AG04449 (cell line): ENCODE measurements at regions of chr4 and their contacts with region 1.

Region 1: DNA sequence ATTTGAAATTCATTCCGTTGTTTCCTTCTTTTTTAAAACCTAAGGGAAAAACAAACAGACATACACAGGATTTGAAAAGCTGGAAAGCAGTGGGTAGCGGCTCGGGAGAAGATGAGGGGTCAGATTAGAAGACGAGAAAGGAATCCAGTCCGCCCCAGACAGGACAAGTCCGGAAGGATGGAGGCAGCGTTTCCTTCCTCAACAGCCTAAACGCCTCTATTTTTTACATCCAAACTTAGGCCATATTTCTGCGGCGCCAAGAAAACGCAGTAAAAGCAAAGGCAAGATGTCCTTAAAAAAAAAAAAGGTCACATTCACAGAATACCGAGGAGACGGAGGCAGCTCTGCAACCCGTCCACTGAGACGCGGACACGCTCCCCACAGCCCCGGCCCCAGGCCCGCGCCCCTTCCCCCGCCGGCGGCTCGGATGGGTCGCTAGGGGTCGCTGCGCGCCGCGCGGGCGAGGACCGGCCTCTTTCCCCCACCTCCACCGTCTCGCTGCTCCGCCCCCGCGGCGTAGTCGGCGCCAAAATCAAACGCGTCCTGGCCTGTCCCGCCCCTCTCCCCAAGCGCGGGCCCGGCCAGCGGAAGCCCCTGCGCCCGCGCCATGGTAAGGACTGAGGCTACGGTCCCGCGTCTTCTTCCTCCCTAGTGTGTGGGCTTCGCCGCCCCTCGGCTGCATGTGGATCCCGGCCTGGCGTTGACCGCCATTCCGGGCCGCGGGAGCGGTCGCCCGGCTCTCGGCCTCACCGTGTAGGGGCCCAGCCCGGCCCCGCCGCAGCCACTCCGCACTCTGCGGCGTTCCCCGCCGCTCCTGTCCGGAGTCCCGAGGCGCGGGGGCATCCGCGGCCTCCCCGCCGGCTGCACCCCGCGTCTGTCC is at the start of gene MND1:
- DNase-seq: no peak
- H3K4me3 ChIP-seq: peak within 1 kb of the TSS; percentile 83
- CTCF ChIP-seq: peak; percentile 81

Region 2: DNA sequence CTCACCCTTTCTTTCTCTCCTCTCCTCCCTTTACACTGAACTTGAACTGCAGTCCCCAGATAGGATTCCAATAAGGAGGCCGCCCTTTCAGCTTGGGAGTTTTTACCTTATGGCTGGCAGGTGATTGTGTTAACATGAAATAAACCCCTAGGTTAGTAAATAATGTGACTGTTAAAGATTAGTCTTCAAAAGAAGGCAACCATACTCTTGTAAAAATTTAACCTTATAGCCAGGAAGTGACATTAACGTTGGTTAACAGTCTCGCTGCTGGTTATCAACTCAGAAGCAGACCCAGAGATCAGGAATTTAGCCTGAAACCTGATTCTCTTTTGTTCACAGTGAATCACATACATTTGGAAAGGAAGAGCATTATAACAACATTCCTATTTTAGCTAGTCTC is 393.0 kb before region 1 on chr4:
- CTCF ChIA-PET with region 1: no interaction called
- POLR2A ChIA-PET with region 1: no interaction called
- DNase-seq: no peak
- H3K4me3 ChIP-seq: no peak overlapping the region
- CTCF ChIP-seq: no peak

Region 3: GRCh38 chr4:153023681-153024394 is 320.5 kb before region 1 on chr4:
- CTCF ChIA-PET with region 1: no interaction called
- POLR2A ChIA-PET with region 1: no interaction called
- DNase-seq: no peak
- H3K4me3 ChIP-seq: no peak overlapping the region
- CTCF ChIP-seq: no peak

Region 4: GRCh38 chr4:153326513-153326912 is 17.9 kb before region 1 on chr4:
- CTCF ChIA-PET with region 1: interaction called, 11 read pairs
- POLR2A ChIA-PET with region 1: no interaction called
- DNase-seq: no peak
- H3K4me3 ChIP-seq: no peak overlapping the region
- CTCF ChIP-seq: no peak

Region 5: DNA sequence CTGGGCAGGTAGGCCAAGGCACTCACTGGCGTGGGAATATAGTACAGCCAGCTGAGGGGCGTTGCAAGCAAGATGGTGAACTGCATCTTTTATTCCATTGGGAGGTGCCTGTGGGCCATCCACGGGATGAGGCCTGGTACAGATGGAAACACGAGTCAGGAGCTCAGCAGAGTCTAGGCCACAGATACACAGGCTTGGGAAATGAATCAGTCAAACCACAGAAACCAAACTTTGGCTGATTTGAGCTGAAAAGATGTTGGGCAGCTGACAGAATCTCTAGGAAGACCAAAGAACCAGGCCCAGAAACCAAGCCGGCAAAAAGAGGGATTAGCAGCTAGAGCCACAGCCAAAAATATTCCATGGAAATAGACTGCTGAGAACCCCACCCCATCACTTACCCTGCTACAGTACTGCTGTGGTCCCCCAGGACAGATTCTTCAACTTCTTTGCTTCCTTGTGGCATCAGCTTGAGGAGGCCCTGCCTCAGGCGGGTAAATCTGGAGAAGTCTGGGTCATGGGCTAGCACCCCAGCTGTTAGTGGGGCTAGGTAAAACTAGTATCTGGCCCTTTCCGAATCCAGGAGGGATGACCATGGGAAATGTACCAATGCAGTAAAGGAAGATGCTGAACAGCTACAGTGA is 197.2 kb after region 1 on chr4:
- CTCF ChIA-PET with region 1: interaction called, 10 read pairs
- POLR2A ChIA-PET with region 1: no interaction called
- DNase-seq: peak; percentile 82
- H3K4me3 ChIP-seq: no peak overlapping the region
- CTCF ChIP-seq: peak; percentile 26

Region 6: GRCh38 chr4:153585026-153585425 is 240.7 kb after region 1 on chr4:
- CTCF ChIA-PET with region 1: interaction called, 10 read pairs
- POLR2A ChIA-PET with region 1: no interaction called
- DNase-seq: no peak
- H3K4me3 ChIP-seq: no peak overlapping the region
- CTCF ChIP-seq: no peak

Region 7: DNA sequence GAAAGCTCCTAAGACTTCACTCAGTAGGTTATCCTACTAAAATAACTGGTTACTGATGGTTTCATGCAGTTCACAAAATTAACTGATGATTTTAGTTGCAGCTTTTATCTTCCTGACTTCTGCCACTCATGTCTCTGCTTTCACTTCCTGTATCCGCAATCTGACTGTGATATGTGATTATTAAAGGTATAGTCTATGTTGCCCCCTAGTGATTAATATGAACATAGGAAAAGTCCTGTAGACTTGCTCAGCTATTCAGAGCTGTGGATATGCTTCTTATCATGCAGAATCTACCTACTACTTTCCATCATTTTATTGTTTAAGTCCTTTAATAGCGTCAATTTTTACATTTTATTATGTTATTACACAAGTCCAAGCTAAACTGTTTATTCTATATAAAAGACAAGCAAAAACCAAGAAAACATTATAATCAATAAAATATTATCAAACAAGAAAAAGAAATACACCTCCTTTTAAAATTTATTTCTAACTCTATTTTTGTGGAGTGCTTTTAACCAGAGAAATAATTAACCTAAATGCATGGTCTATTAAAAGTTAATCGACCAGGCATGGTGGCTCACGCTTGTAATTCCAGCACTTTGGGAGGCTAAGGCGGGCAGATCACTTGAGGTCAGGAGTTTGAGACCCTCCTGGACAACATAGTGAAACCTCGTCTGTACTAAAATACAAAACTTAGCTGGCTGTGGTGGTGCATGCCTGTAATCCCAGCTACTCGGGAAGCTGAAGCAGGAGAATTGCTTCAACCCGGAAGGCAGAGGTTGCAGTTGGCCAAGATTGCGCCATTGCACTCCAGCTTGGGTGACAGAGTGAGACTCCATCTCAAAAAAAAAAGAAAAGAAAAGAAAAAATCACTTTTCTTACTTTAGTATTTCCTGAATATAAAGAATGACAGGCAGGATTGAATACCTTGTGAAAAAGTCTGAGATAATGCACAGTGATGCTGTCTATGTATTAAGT is 299.3 kb after region 1 on chr4:
- CTCF ChIA-PET with region 1: interaction called, 12 read pairs
- POLR2A ChIA-PET with region 1: no interaction called
- DNase-seq: no peak
- H3K4me3 ChIP-seq: no peak overlapping the region
- CTCF ChIP-seq: peak; percentile 46